MCF 10A (cell line): ENCODE measurements at regions of chrX and their contacts with region 1.

Region 1: GRCh38 chrX:47650164-47651042 is at the start of gene ELK1:
- DNase-seq: peak; percentile 97
- H3K4me3 Mint-ChIP-seq: peak within 1 kb of the TSS; percentile 77
- H3K27ac Mint-ChIP-seq: peak within 1 kb of the TSS; percentile 80
- H3K4me1 Mint-ChIP-seq: peaks cover 15% of the 10 kb centered on the region
- H3K27me3 Mint-ChIP-seq: no peaks in the 10 kb centered on the region
- CTCF ChIP-seq: no peak
- total RNA-seq, gene ELK1: 48.8 and 51.7 TPM in 2 replicates

Region 2: GRCh38 chrX:47751670-47752069 is 101.3 kb after region 1 on chrX:
- CTCF ChIA-PET with region 1: no interaction called
- POLR2A ChIA-PET with region 1: no interaction called
- intact Hi-C with region 1: loop called (anchors 2 kb)
- DNase-seq: peak; percentile 45
- H3K4me3 Mint-ChIP-seq: no peak overlapping the region
- H3K27ac Mint-ChIP-seq: no peak overlapping the region
- H3K4me1 Mint-ChIP-seq: no peaks in the 10 kb centered on the region
- H3K27me3 Mint-ChIP-seq: no peaks in the 10 kb centered on the region
- CTCF ChIP-seq: peak; percentile 51

Region 3: GRCh38 chrX:48794911-48795501 is 1144.6 kb after region 1 on chrX:
- CTCF ChIA-PET with region 1: no interaction called
- POLR2A ChIA-PET with region 1: no interaction called
- intact Hi-C with region 1: no loop called
- DNase-seq: peak; percentile 56
- H3K4me3 Mint-ChIP-seq: no peak overlapping the region
- H3K27ac Mint-ChIP-seq: no peak overlapping the region
- H3K4me1 Mint-ChIP-seq: peaks cover 5% of the 10 kb centered on the region
- H3K27me3 Mint-ChIP-seq: peaks cover 5% of the 10 kb centered on the region
- CTCF ChIP-seq: no peak